Naive thymus-derived CD8-positive, alpha-beta T cell (primary cell): ENCODE measurements at regions of chr6 and their contacts with region 1.

Region 1: DNA sequence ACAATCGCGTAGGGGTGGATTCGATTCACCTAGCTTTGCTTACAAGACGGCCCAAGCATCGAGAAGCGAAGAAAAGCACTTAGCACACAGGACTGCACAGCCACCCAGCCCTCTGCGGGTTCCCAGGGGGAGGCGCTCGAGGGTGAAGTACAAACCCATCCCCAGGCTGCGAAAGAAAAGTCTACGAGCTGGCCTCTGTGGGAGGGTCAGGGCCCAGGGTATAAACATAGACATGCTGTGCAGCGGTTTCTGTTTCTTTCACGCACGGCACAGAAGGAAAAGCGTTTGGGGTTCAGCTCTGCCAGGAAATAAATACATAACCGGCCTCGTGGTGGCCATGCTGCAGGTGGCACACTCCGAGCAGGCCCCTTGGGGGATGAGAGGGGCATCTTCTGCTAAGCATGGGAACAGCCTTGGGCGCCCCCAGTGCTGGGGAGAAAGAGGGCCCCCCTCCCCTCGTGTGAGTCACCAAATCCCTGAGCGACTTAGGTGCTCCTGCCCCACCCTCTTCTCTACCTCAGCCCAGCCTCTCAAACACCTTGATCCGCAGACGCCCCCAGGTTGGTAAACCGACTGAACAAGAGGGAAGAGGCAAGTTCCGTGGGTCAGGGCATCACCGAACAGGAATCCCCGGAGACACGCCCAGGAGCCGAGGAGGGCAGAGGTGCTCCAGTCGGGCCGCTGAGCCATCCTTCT is 91.6 kb upstream of the RIPOR2 start:
- DNase-seq: peak; percentile 48 to 81 (median 61)
- ATAC-seq: peak; percentile 96
- H3K4me3 Mint-ChIP-seq: peak overlapping the region; percentile 69 to 86 (median 76)
- H3K27ac Mint-ChIP-seq: peak overlapping the region; percentile 24 to 90 (median 81)
- H3K4me1 Mint-ChIP-seq: peaks cover 11 to 39% (median 31%) of the 10 kb centered on the region in 4 donors
- H3K27me3 Mint-ChIP-seq: no peaks in the 10 kb centered on the region

Region 2: DNA sequence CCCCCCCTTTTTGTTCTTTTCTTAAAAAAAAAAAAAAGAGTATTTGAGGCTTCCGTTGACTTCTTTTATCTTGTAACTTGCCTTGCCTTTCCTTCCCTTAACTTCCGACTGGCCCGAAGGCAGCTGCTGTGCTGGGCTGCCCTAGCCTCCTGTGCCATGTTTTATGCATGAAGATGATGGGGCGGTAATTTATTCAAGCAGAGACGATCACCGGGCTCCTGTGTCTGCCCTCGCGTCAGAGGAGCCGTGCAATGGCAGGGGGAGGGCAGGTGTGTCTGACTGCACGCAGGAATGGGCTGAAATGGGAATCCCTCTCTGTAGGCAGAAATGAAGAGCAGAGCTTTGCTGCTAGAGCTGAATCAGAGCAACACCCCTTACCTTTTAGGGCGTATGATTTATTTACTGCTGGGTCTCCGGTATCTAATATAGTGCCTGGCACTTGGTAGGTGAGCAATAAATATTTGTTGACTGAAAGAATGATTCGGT is 14.7 kb after region 1 on chr6:
- POLR2A ChIA-PET with region 1: interaction called, 19 read pairs
- DNase-seq: peak in 9 of 10 donors; percentile 26 to 73 (median 42)
- ATAC-seq: peak; percentile 72 to 78
- H3K4me3 Mint-ChIP-seq: peak overlapping the region; percentile 89 to 98 (median 93)
- H3K27ac Mint-ChIP-seq: peak overlapping the region; percentile 90 to 98 (median 94)
- H3K4me1 Mint-ChIP-seq: peaks cover 27 to 70% (median 62%) of the 10 kb centered on the region in 4 donors
- H3K27me3 Mint-ChIP-seq: no peaks in the 10 kb centered on the region